Activated T-helper 1 cell treated with anti-CD3 and anti-CD28 coated beads, Interleukin-12 subunit alpha, Interleukin-12 subunit beta, Interleukin-2, Interleukin-4 antibody, amounts not matched to agents 30 ng/mL and 10 ng/mL and 1 ng/mL, durations not matched to agents 14 hours and 24 hours and 36 hours (primary cell): ENCODE measurements at regions of chr9 and their contacts with region 1.

Region 1: GRCh38 chr9:97921959-97922724 is at the start of gene TRMO:
- DNase-seq: peak; percentile 96
- H3K4me3 Mint-ChIP-seq: peak within 1 kb of the TSS; percentile 96
- H3K27ac Mint-ChIP-seq: peak within 1 kb of the TSS; percentile 99
- H3K4me1 Mint-ChIP-seq: peaks cover 59% of the 10 kb centered on the region
- H3K27me3 Mint-ChIP-seq: no peaks in the 10 kb centered on the region
- total RNA-seq, gene TRMO: 13.1 and 14.5 TPM in 2 replicates

Region 2: GRCh38 chr9:97411789-97412625 is 510.1 kb before region 1 on chr9 and contains the start of gene TDRD7:
- intact Hi-C with region 1: loop called (anchors 10 kb)
- DNase-seq: peak; percentile 87
- H3K4me3 Mint-ChIP-seq: peak within 1 kb of the TSS; percentile 84
- H3K27ac Mint-ChIP-seq: peak within 1 kb of the TSS; percentile 61
- H3K4me1 Mint-ChIP-seq: peaks cover 35% of the 10 kb centered on the region
- H3K27me3 Mint-ChIP-seq: peaks cover 34% of the 10 kb centered on the region
- total RNA-seq, gene TDRD7: 4.7 TPM in 2 replicates

Region 3: DNA sequence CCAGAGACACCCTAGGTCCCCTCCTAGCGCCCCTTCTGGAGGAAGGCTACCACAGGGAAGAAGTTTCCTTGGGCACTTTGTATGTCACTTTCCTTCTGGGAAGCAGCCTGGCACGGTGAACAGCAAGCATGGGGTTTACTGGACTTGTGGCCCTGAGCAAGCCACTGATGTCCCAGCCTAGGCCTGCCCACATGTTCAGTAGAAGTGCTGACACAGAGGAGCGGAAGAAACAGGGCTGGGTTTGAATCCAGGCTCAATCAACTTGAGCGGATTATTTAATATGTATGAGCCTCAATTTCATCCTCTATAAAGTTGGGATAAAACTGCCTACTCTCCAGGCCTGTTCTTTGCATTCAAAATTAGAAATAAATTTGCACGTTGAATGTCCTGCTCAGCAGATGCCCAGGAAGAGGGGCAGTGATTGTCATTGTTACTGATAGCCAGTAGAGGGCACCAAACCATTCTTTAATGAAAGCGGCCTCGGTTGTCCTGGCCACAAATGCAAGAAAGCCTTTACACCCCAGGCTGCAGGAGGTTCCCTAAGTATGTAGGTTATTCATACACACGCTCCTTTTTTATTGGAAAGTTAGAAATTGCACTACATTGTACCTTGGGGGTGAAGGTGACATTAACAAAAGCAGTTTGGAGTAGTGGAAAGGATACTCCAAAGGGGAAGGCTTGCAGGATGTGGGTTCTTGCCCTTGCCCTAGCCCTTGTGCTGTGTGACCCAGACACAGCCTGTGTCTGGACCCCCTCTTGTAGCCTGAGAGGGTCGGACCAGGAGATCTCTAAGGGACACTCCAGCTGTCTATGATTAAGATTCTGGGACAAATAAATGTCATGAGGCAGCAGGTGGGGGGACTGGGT is 211.6 kb before region 1 on chr9:
- intact Hi-C with region 1: loop called (anchors 1 kb)
- DNase-seq: peak; percentile 31
- H3K4me3 Mint-ChIP-seq: no peak overlapping the region
- H3K27ac Mint-ChIP-seq: no peak overlapping the region
- H3K4me1 Mint-ChIP-seq: peaks cover 29% of the 10 kb centered on the region
- H3K27me3 Mint-ChIP-seq: peaks cover 15% of the 10 kb centered on the region

Region 4: DNA sequence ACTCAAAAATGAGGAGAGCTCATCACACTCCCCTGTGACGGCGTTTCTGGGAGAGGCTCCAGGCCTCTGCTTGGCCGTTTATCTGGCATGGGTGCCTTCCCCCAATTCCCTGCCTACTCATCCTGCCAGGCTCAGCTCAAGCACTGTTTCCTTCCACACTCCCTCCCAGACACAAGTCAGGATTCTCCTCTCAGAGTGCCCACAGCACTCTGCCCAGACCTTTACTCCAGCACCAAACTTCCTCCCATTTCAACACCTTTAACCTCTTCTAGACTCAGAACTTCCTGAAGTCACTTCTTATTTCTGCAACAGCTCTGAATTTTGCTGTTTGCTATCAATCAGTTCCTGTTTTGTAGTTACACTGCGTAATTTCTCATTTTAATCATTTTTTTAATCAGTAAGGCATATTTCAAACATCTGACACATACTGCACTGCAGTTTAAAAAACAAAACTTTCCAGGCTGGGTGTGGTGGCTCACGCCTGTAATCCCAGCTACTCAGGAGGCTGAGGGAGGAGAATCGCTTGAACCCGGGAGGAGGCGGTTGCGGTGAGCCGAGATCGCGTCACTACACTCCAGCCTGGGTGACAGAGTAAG is 15.8 kb before region 1 on chr9:
- intact Hi-C with region 1: loop called (anchors 1 kb)
- DNase-seq: no peak
- H3K4me3 Mint-ChIP-seq: peak overlapping the region; percentile 72
- H3K27ac Mint-ChIP-seq: peak overlapping the region; percentile 98
- H3K4me1 Mint-ChIP-seq: peaks cover 81% of the 10 kb centered on the region
- H3K27me3 Mint-ChIP-seq: no peaks in the 10 kb centered on the region

Region 5: GRCh38 chr9:97938081-97938644 is 16.0 kb after region 1 on chr9 and contains the start of gene HEMGN:
- intact Hi-C with region 1: no loop called
- DNase-seq: no peak
- H3K4me3 Mint-ChIP-seq: no peak within 1 kb of the TSS
- H3K27ac Mint-ChIP-seq: peak within 1 kb of the TSS; percentile 10
- H3K4me1 Mint-ChIP-seq: peaks cover 19% of the 10 kb centered on the region
- H3K27me3 Mint-ChIP-seq: peaks cover 3% of the 10 kb centered on the region
- total RNA-seq, gene HEMGN: 0.24 and 0.31 TPM in 2 replicates

Region 6: DNA sequence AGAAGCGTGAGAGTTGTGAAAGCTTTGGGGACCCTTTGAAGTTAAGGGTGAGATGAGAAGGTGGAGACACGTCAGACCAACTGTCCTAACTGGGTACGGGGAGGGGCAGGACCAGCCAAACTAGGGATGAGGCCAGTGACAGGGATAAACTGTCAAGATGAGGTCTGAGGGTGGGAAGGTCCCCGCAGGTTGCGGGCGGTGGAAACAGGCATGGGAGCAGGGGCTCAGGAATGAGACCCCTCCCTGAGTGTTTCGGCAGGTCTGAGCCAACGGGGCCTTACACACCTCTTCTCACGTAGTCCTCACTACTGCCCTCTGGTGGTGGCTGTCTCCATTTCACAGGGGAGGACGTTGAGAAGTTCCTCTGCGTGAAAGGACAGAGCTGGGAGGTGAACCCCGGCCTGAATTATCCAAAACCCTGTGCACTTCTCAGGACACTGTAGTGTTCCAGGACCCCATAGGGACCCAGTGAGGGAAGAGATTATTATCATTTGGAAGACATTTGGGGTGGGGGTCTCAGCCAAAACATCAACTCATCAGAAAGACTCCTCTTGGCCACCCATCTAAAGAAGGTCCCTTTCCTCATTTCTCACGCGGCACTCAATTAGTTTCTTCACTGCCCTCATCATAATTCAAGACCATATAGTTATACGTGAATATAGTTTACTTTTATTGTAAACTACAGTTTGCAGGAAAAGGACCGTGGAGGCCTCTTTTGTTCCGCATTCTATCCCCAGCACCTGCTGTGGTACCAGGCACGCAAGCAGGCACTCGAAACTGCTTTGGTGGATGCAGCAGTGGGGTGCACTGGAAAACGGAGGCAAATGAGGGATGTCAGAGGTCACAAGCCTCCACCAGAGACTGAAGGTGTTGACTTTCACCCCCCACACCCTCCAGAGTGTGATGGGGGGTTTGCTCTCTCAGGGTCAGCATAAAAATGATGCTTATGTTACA is 112.7 kb after region 1 on chr9:
- intact Hi-C with region 1: loop called (anchors 1 kb)
- DNase-seq: peak; percentile 80
- H3K4me3 Mint-ChIP-seq: no peak overlapping the region
- H3K27ac Mint-ChIP-seq: peak overlapping the region; percentile 50
- H3K4me1 Mint-ChIP-seq: peaks cover 10% of the 10 kb centered on the region
- H3K27me3 Mint-ChIP-seq: peaks cover 2% of the 10 kb centered on the region

Region 7: DNA sequence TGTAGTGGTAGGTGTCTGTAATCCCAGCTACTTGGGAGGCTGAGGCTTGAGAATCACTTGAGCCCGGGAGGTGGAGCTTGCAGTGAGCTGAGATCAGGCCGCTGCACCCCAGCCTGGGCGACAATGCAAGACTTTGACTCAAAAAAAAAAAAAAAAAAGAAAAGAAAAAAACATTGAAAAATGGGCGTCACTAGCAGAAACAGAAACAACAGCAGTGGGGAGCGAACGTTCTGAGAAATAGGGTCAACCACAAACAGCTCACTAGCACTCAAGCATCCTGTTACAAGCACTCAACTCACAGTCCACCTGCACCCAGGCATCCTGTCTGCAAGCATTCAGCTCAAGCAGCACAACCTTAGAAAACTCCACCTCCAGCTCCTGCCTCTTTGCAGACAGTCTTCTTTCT is 179.7 kb after region 1 on chr9:
- intact Hi-C with region 1: loop called (anchors 2 kb)
- DNase-seq: peak; percentile 83
- H3K4me3 Mint-ChIP-seq: peak overlapping the region; percentile 69
- H3K27ac Mint-ChIP-seq: peak overlapping the region; percentile 88
- H3K4me1 Mint-ChIP-seq: peaks cover 85% of the 10 kb centered on the region
- H3K27me3 Mint-ChIP-seq: no peaks in the 10 kb centered on the region

Region 8: DNA sequence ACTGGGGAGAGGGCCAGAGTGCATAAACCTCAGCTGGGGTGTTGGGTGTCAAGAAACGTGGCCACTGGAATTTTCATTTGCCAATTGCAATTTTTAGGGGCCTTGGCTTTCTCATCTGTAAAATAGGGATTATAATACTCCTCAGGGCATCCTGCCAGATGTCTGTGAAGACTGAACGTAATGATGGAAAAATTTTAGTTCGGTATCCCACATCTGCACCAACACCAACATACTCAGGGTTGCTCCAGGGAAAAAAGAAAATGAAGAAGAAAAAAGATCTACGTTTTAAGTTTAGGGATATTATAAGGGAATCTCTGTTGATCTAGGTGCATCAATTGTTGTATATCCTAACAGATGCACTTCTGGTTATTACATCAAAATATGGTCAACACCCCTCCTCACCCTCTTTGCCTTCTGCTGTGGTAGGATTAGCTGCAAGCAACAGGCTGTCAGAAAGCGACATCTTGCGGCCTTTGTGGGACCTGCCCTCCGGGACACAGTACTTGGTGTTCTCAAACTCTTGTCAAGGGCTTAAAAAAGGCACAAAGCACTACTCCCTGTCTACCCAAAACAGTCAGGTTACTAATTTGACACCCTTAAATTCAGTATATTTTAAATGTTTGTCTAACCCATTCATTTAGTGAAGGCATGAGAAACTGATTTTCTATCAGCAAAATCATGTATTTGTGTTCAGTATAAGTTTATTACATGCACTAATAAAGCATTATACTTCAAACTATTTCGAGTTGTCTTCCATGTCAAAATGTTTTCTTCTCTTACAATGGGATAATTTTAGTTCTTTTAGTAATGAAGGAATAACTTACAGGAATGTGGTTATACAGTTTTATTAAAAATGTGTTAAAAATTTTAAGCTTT is 341.6 kb after region 1 on chr9:
- intact Hi-C with region 1: loop called (anchors 1 kb)
- DNase-seq: peak; percentile 72
- H3K4me3 Mint-ChIP-seq: no peak overlapping the region
- H3K27ac Mint-ChIP-seq: no peak overlapping the region
- H3K4me1 Mint-ChIP-seq: no peaks in the 10 kb centered on the region
- H3K27me3 Mint-ChIP-seq: peaks cover 9% of the 10 kb centered on the region